Activated naive CD4-positive, alpha-beta T cell treated with anti-CD3 and anti-CD28 coated beads for 36 hours (primary cell): ENCODE measurements at regions of chr11 and their contacts with region 1.

Region 1: GRCh38 chr11:127843483-127844396 is 743.6 kb downstream of the ETS1 start:
- DNase-seq: peak; percentile 89
- H3K4me3 Mint-ChIP-seq: no peak overlapping the region
- H3K27ac Mint-ChIP-seq: no peak overlapping the region
- H3K4me1 Mint-ChIP-seq: no peaks in the 10 kb centered on the region
- H3K27me3 Mint-ChIP-seq: peaks cover 3% of the 10 kb centered on the region

Region 2: DNA sequence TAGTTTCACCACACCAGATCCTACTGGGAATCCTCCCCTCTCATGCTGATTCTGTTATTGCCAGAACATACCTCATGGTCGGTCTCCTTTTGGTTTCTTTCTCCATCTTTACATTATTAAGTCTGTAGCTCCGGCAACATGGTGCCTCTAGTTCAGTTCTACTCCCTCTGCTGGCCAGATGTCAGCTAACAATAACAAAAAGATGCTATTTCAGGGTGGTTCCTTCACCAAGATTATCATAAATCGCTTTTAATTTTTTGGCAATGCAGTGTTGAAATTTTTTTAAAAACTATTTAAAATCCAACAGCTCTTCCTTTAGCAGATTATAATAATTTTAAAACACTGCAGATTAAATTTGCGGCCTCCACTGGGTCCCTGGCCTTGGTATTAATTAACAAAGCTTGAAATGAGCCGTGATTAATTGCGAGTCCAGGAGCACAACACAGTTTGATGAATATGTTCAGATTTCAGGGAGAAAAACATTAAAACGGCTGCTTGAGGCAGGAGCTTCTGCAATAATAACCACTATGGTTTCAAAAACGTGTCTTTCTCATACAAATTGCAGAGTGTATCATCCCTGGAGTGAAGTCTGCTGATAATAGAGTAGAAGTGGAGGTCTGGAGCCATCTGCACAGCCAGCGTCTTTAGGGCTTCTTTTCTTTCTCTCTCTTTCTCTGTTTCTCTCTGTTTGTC is 350.3 kb before region 1 on chr11:
- CTCF ChIA-PET with region 1: no interaction called
- intact Hi-C with region 1: no loop called
- DNase-seq: no peak
- H3K4me3 Mint-ChIP-seq: no peak overlapping the region
- H3K27ac Mint-ChIP-seq: no peak overlapping the region
- H3K4me1 Mint-ChIP-seq: no peaks in the 10 kb centered on the region
- H3K27me3 Mint-ChIP-seq: peaks cover 3% of the 10 kb centered on the region

Region 3: GRCh38 chr11:127993788-127994187 is 150.0 kb after region 1 on chr11:
- CTCF ChIA-PET with region 1: interaction called, 5 read pairs
- intact Hi-C with region 1: loop called (anchors 1 kb)
- DNase-seq: no peak
- H3K4me3 Mint-ChIP-seq: no peak overlapping the region
- H3K27ac Mint-ChIP-seq: no peak overlapping the region
- H3K4me1 Mint-ChIP-seq: no peaks in the 10 kb centered on the region
- H3K27me3 Mint-ChIP-seq: peaks cover 8% of the 10 kb centered on the region

Region 4: DNA sequence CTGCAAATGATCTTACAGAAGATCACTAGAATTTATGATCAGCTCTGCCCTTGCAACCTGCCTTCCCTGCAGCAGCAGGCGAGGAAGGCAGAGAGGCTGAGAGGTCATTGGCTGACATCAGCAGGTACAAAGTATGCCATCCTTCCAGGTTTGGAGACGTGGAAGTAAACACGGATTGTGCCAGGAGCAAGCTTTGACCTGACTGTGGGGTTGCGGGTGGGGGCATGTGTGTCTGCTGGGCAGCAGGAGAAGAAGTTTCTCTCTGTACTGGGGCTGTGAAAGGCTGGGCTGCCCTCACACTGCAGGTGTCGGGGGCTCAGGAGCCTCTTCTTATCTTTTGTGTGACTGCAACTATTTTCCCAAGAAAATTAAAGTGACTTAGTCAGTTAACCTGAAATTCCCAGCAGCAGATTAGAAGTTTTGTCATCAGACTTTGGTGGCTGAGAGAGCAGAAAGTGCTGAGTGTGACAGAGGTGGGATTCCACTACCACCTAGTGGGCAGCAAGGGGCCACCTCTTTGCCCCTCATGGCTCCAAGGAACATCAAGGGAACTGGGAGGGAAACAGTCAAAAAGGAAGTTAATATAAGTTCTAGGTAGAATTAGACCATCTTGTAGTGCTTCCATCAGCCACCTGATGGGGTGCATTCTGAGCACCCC is 177.7 kb after region 1 on chr11:
- CTCF ChIA-PET with region 1: interaction called, 3 read pairs
- intact Hi-C with region 1: loop called (anchors 5 kb)
- DNase-seq: no peak
- H3K4me3 Mint-ChIP-seq: no peak overlapping the region
- H3K27ac Mint-ChIP-seq: no peak overlapping the region
- H3K4me1 Mint-ChIP-seq: peaks cover 5% of the 10 kb centered on the region
- H3K27me3 Mint-ChIP-seq: no peaks in the 10 kb centered on the region